Posterior vena cava (tissue), 2 donors: ENCODE measurements at regions of chr3 and their contacts with region 1.

Region 1: GRCh38 chr3:103906304-103906703 is 1460.4 kb upstream of the ALCAM start:
- DNase-seq: no peak

Region 2: GRCh38 chr3:103937094-103937493 is 30.8 kb after region 1 on chr3:
- intact Hi-C with region 1: loop called in 1 of 2 experiments (anchors 2 kb)
- DNase-seq: no peak